A549 (cell line): ENCODE measurements at regions of chr3 and their contacts with region 1.

Region 1: GRCh38 chr3:19866751-19867347 is 67.2 kb downstream of the EFHB start:
- DNase-seq: peak; percentile 28 to 61
- ATAC-seq: peak; percentile 92 to 95
- H3K4me3 ChIP-seq: no peak overlapping the region
- H3K27ac ChIP-seq: no peak overlapping the region
- H3K4me1 ChIP-seq: no peaks in the 10 kb centered on the region
- CTCF ChIP-seq: peak; percentile 91
- EP300 ChIP-seq: no peak
- POLR2A ChIP-seq: no peak
- RAD21 ChIP-seq: peak; percentile 92 to 93

Region 2: DNA sequence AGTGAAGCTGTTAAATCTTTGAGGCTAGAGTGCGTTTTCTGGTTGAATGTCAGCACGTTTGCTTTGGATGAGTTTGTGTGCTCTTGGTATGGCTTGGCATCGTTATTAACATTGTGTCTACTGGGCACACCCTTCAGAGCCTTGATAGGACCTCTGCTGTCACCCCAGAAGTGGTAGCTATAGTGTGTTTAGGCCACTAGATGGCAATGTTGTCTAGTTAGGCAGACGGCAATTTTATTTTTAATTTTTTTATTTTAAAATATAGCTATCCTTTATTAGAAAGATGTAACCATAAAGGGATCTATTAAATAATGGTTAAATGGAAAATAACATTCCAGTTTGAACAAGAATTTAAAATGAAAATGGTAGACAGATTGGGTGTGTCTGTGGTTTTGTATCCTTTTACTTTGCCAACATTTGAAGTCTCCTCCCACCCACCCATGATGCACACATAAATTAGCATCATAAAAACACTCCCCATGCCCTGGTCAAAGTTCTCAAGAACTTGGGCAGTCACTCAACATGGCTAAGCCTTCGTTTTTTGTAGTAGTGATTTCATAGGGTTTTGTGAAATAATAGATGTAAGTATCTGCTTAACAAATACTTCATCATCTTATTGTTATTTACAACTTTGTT is 517.8 kb before region 1 on chr3:
- CTCF ChIA-PET with region 1: interaction called, 23 read pairs
- POLR2A ChIA-PET with region 1: no interaction called
- DNase-seq: peak; percentile 8 to 36
- ATAC-seq: peak in 1 of 2 experiments; percentile 85; a peak in 3 of 6 replicates
- H3K4me3 ChIP-seq: no peak overlapping the region
- H3K27ac ChIP-seq: no peak overlapping the region
- H3K4me1 ChIP-seq: no peaks in the 10 kb centered on the region
- CTCF ChIP-seq: peak; percentile 74
- EP300 ChIP-seq: no peak
- POLR2A ChIP-seq: no peak
- RAD21 ChIP-seq: peak; percentile 71 to 75

Region 3: GRCh38 chr3:19881036-19881435 is 14.2 kb after region 1 on chr3:
- CTCF ChIA-PET with region 1: interaction called, 20 read pairs
- POLR2A ChIA-PET with region 1: no interaction called
- DNase-seq: no peak
- ATAC-seq: no peak
- H3K4me3 ChIP-seq: no peak overlapping the region
- H3K27ac ChIP-seq: no peak overlapping the region
- H3K4me1 ChIP-seq: peaks cover 10% of the 10 kb centered on the region
- CTCF ChIP-seq: no peak
- EP300 ChIP-seq: no peak
- POLR2A ChIP-seq: no peak
- RAD21 ChIP-seq: no peak

Region 4: DNA sequence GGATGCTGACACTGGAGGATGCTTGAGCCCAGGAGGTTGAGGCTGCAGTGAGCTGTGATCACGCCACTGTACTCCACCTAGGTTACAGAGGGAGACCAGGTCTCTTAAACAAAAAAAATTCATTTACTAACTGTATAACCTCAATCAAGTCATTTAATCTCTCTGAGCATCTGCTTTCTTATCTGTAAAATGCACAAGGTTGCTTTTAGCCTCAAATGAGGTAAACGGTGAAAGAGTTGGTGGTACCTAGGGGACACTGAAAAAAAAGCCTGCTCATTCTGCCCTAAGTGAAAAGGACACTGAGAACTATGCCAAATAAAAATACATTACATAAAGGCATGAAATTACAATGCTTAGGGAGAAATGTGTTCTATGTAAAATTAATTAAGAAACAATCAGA is 141.8 kb after region 1 on chr3:
- CTCF ChIA-PET with region 1: no interaction called
- POLR2A ChIA-PET with region 1: no interaction called
- DNase-seq: no peak
- ATAC-seq: no peak
- H3K4me3 ChIP-seq: no peak overlapping the region
- H3K27ac ChIP-seq: no peak overlapping the region
- H3K4me1 ChIP-seq: no peaks in the 10 kb centered on the region
- CTCF ChIP-seq: no peak
- EP300 ChIP-seq: no peak
- POLR2A ChIP-seq: no peak
- RAD21 ChIP-seq: no peak

Region 5: DNA sequence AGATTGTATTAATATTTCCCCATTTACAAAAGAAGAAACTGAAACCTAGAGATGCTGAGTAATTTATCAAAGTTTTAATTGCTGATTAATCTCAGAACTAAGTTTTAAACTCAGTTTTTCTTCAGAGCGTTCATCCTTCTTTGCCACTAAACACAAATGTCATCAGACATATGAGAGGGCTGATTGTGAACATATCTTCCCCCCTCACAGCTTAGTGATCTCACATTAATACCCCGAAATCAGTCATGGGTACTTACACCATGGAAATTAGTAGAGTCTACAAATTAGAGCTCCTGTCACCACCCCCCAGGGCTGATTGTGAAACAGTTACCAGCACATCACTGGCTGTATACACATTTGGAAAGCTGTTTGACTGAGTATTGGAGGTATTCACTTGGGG is 508.5 kb after region 1 on chr3:
- CTCF ChIA-PET with region 1: no interaction called
- POLR2A ChIA-PET with region 1: no interaction called
- DNase-seq: no peak
- ATAC-seq: no peak
- H3K4me3 ChIP-seq: no peak overlapping the region
- H3K27ac ChIP-seq: no peak overlapping the region
- H3K4me1 ChIP-seq: no peaks in the 10 kb centered on the region
- CTCF ChIP-seq: no peak
- EP300 ChIP-seq: no peak
- POLR2A ChIP-seq: no peak
- RAD21 ChIP-seq: no peak